PC-9 (cell line): ENCODE measurements at regions of chr3 and their contacts with region 1.

Region 1: GRCh38 chr3:111338059-111338698 is 203.8 kb upstream of the CD96 start:
- DNase-seq: peak in 1 of 2 experiments; percentile 66
- H3K4me3 ChIP-seq: no peak overlapping the region
- H3K27ac ChIP-seq: no peak overlapping the region
- H3K4me1 ChIP-seq: no peaks in the 10 kb centered on the region
- H3K27me3 ChIP-seq: no peaks in the 10 kb centered on the region
- CTCF ChIP-seq: peak; percentile 90

Region 2: DNA sequence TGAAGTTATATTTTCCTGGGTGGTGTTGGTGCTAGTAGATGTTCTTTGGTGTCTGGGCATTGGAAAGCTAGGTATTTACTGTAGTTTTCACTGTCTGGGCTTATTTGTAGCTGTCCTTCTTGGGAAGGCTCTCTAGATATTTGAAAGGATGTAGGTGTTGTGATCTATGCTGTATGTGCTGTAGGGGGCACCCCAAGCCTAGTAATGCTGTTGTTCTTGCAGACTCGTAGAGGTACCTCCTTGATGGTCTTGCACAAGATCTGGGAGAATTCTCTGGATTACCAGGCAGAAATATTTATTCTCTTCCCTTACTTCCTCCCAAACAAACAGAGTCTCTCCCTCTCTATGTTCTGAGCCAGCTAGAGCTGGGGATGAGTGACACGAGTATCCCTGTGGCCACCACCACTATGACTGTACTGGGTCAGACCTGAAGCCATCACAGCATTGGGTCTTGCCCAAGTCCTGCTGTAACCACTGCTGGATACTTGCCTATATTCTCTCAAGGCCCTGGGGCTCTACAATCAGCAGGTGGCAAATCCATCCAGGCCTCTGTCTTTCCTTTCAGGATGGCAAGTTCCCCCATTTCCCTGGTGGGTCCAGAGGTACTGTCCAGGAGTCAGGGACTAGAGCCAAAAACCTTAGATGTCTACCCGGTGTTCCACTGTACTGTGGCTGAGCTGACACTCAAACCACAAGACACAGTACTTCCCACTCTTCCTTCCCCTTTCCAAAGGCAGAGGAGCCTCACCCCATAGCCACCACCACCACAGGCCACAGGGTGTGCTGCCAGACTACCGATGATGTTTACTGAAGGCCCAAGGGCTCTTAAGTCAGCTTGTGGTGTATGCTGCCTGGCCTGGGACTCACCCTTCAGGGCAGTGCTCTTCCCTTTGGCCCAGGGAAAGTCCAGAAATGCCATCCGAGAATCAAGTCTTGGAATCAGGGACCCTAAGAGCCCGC is 1805.6 kb before region 1 on chr3:
- CTCF ChIA-PET with region 1: no interaction called
- POLR2A ChIA-PET with region 1: no interaction called
- intact Hi-C with region 1: loop called (anchors 2 kb)
- DNase-seq: peak; percentile 63 to 71
- H3K4me3 ChIP-seq: no peak overlapping the region
- H3K27ac ChIP-seq: no peak overlapping the region
- H3K4me1 ChIP-seq: no peaks in the 10 kb centered on the region
- H3K27me3 ChIP-seq: no peaks in the 10 kb centered on the region
- CTCF ChIP-seq: peak; percentile 75

Region 3: GRCh38 chr3:109731620-109732473 is 1606.3 kb before region 1 on chr3:
- CTCF ChIA-PET with region 1: no interaction called
- POLR2A ChIA-PET with region 1: no interaction called
- intact Hi-C with region 1: loop called (anchors 10 kb)
- DNase-seq: peak in 1 of 2 experiments; percentile 32
- H3K4me3 ChIP-seq: no peak overlapping the region
- H3K27ac ChIP-seq: no peak overlapping the region
- H3K4me1 ChIP-seq: no peaks in the 10 kb centered on the region
- H3K27me3 ChIP-seq: no peaks in the 10 kb centered on the region
- CTCF ChIP-seq: peak; percentile 100

Region 4: GRCh38 chr3:110995461-110996231 is 342.5 kb before region 1 on chr3:
- CTCF ChIA-PET with region 1: no interaction called
- POLR2A ChIA-PET with region 1: interaction called, 11 read pairs
- intact Hi-C with region 1: no loop called
- DNase-seq: no peak
- H3K4me3 ChIP-seq: no peak overlapping the region
- H3K27ac ChIP-seq: no peak overlapping the region
- H3K4me1 ChIP-seq: no peaks in the 10 kb centered on the region
- H3K27me3 ChIP-seq: no peaks in the 10 kb centered on the region
- CTCF ChIP-seq: no peak

Region 5: DNA sequence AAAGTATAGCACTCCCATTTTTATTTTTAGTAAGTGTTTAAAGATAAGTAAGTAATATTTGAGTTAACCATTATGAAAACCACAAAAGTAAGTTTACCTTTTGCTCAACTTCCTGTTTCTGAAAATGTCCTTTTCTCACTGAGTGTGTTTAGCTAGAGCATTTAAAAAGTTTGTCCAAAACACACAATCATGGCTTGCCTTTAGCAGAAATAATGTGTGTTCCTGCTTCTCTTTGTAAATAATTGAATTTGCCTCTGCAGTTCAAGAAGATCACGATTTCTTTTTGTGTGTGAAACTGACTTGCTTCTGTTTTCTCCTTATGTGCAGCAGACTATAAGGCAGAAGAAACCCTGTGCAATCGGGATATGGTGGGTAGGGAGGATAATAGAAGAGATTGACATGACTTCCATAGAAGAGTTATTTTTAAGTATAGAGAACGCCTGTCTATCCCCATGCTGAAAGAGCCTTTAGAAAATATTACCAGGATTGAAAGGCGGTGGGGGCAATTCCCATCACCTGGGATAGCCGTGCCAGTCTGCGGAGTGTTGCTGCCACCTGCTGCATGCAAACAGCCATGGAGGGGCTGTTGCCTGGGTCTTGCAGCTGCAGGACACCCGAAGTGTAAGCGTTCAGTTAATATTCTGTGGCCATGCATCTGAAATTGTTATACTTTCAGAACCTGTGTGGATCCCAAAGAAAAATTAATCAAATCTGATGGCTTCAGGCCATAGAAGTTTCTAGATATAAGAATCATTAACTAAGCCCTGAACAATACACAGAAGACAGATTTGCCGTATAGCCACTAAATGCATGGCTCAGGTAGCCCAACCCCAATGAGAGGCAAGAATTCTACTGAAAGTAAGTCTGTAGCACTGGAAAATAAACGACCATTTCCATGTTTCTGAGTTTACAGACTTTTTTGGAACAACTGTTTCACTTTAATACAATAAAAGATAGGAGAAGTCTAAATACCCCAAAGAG is 201.5 kb after region 1 on chr3:
- CTCF ChIA-PET with region 1: no interaction called
- POLR2A ChIA-PET with region 1: no interaction called
- intact Hi-C with region 1: loop called (anchors 1 kb)
- DNase-seq: peak in 1 of 2 experiments; percentile 65
- H3K4me3 ChIP-seq: peak overlapping the region; percentile 4
- H3K27ac ChIP-seq: peak overlapping the region; percentile 33
- H3K4me1 ChIP-seq: peaks cover 33% of the 10 kb centered on the region
- H3K27me3 ChIP-seq: no peaks in the 10 kb centered on the region
- CTCF ChIP-seq: peak; percentile 79

Region 6: DNA sequence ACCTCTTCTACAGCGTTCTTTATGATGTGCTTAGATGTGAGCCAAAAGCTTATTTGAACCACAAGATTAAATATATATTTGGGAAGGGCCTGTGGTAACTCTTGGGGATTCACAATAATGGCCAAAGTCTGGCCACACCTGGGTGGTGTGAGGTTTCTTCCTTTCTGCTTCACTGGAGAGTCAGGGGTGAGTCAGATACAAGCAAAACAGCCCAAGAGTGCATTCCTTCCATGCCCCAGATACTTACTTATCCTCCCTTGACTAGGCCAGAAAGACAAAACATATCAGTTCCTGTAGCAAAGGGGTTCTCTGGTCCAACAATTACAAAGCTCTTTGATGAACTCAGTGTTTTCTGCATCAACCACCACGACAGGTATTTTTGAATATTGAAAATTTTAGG is 256.0 kb after region 1 on chr3:
- CTCF ChIA-PET with region 1: no interaction called
- POLR2A ChIA-PET with region 1: interaction called, 11 read pairs
- intact Hi-C with region 1: no loop called
- DNase-seq: peak; percentile 74 to 92
- H3K4me3 ChIP-seq: no peak overlapping the region
- H3K27ac ChIP-seq: peak overlapping the region; percentile 57
- H3K4me1 ChIP-seq: peaks cover 28% of the 10 kb centered on the region
- H3K27me3 ChIP-seq: no peaks in the 10 kb centered on the region
- CTCF ChIP-seq: no peak